PC-3 (cell line): ENCODE measurements at regions of chr18 and their contacts with region 1.

Region 1: DNA sequence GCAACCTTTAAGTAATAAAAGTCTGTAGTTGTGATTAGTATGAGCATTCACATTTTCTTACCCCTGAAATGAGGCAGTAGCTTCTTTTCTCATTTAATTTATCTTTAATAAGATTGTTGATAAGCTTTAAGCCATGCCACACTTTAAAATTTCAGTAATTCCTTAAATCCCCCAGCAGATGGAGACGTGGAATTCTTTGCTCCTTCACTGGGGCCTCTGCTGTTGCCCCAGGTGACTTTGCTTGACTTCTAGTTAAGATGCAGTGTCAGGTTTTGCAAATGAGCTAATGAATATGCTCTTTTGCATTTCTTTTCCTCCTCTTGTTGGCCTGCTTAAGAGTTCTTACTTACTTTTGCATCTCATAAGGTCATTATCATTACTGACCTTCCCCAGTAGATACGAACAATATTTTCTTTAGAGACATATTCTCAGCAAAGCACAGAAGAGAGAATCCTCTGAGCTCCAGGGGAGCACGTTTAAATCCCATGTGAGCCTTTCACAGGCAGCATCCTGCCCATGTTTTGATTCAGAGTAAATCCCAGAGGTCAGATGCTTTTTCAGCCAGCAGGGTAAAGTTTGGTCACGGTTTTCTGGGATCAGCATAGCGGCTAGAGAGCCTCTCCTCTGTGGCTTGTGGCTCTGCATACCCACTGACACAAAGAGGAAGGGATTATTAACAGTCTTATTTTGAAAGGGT is 222.9 kb downstream of the PTPRM start:
- DNase-seq: peak; percentile 65
- ATAC-seq: peak; percentile 90
- H3K4me3 ChIP-seq: no peak overlapping the region
- H3K27ac ChIP-seq: no peak overlapping the region
- H3K4me1 ChIP-seq: no peaks in the 10 kb centered on the region
- H3K27me3 ChIP-seq: no peaks in the 10 kb centered on the region
- CTCF ChIP-seq: peak; percentile 84

Region 2: DNA sequence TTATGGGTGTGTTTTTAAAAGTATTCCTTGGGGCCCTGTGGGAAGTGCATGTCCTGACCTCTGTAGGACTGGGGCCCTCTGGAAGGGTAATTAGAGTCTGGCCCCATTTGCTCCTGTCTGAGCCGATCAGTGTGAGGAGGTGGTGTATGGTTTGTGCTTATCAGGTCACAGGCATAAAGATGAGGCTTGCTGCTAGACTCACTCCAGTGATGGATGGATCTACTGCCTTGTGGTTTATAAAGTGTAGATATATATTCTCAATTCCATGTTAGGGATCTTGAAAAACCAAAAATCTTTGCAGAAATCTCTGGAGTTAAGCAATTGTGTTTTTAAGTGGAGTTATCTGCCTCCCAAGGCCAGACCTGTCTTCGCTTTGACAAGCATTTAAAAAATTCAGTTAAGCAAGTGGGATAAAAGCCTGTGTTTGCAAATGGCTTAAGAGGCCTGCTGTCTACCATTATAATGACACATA is 40.5 kb before region 1 on chr18:
- CTCF ChIA-PET with region 1: no interaction called
- POLR2A ChIA-PET with region 1: no interaction called
- intact Hi-C with region 1: no loop called
- DNase-seq: no peak
- ATAC-seq: no peak
- H3K4me3 ChIP-seq: no peak overlapping the region
- H3K27ac ChIP-seq: no peak overlapping the region
- H3K4me1 ChIP-seq: peaks cover 9% of the 10 kb centered on the region; the same call in 1 of the 2 replicates
- H3K27me3 ChIP-seq: no peaks in the 10 kb centered on the region
- CTCF ChIP-seq: no peak

Region 3: DNA sequence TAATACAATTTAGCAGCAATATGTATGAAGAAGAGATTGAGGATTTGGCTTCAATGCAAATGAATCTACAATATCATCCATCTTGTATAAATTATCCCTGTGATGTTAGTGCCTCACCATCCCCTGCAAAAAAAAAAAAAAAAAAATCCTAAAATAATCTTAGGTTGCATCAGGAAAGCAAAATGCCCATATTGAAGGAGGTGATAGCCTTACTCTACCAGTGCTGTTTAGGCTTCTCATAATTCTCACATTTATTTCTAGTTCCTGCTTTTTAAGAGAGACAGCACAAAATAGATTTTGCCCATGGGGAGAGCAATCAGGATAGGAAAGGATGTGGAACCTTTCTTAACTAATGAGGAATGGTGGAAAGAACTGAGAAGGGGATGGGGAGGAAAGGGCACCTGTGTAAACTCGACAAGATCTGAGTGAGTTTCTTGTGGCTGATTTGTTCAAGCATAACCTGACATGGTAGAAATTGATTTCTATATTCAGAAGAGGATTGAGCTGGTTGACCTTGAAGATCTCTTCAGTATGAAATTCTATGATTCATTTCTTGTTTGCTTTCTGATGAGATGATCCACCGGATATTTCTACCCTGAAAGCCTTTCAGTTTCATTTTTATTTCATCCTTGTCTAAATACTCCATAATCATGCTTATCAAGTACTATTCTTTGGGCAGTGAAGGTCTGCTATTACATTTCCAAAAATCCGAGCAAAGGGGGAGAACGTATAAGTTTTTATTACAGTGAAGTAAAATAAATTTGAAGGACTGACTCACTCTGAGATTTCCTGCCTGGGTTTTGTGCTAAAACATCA is 168.3 kb after region 1 on chr18:
- CTCF ChIA-PET with region 1: interaction called, 3 read pairs
- POLR2A ChIA-PET with region 1: no interaction called
- intact Hi-C with region 1: loop called (anchors 2 kb)
- DNase-seq: peak; percentile 74
- ATAC-seq: peak; percentile 82
- H3K4me3 ChIP-seq: peak overlapping the region; percentile 59
- H3K27ac ChIP-seq: peak overlapping the region; percentile 83
- H3K4me1 ChIP-seq: peaks cover 31% of the 10 kb centered on the region
- H3K27me3 ChIP-seq: no peaks in the 10 kb centered on the region
- CTCF ChIP-seq: no peak

Region 4: DNA sequence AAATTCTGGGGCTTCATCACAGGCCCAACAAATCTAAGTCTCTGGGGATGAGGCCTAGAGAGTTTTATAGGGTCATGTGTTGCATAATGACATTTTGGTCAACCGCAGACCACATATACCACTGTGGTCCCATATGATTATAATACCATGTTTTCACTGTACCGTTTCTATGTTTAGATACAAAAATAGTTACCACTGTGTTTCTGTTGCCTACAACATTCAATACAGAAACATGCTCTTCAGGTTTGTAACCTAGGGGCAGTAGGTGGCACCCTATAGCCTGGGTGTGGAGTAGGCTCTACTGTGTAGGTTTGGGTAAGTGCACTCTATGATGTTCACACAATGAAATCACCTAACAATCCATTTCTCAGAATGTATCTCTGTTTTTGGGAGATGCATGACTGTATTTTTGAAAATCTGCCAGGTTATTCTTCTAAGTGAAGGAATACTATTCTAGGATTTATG is 262.3 kb after region 1 on chr18:
- CTCF ChIA-PET with region 1: no interaction called
- POLR2A ChIA-PET with region 1: no interaction called
- intact Hi-C with region 1: loop called (anchors 10 kb)
- DNase-seq: peak; percentile 27
- ATAC-seq: peak; percentile 70
- H3K4me3 ChIP-seq: no peak overlapping the region
- H3K27ac ChIP-seq: no peak overlapping the region
- H3K4me1 ChIP-seq: peaks cover 13% of the 10 kb centered on the region
- H3K27me3 ChIP-seq: no peaks in the 10 kb centered on the region
- CTCF ChIP-seq: peak; percentile 46; the same call in 1 of the 2 replicates